Activated CD8-positive, alpha-beta T cell treated with anti-CD3 and anti-CD28 coated beads for 36 hours (primary cell): ENCODE measurements at regions of chr4 and their contacts with region 1.

Region 1: DNA sequence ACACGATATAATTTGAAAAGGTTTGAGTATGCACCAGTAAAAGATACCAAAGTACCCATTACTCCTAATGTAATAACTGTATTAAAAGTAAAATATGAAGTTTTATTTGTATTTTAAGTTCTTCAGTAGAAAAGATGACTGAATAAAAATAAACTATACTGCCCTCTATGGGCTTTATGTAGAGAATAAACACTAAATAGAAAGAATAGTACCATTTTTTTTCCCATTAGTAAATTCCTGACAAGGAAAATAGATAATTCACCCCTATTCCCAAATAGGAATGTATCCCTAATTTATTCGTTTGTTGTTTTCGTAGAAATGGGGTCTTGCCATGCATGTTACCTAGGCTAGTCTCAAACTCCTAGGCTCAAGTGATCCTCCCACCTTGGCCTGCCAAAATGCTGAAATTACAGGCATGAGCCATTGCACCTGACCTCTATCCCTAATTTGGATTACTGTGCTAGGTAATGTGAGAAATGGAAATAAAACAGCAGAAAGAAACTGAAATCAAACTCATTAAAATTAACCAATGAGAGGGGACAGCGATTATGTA is 73.6 kb upstream of the COX18 start:
- DNase-seq: no peak
- ATAC-seq: no peak
- H3K4me3 Mint-ChIP-seq: no peak overlapping the region
- H3K27ac Mint-ChIP-seq: no peak overlapping the region
- H3K4me1 Mint-ChIP-seq: peaks cover 10% of the 10 kb centered on the region
- H3K27me3 Mint-ChIP-seq: no peaks in the 10 kb centered on the region
- CTCF ChIP-seq: peak; percentile 52

Region 2: DNA sequence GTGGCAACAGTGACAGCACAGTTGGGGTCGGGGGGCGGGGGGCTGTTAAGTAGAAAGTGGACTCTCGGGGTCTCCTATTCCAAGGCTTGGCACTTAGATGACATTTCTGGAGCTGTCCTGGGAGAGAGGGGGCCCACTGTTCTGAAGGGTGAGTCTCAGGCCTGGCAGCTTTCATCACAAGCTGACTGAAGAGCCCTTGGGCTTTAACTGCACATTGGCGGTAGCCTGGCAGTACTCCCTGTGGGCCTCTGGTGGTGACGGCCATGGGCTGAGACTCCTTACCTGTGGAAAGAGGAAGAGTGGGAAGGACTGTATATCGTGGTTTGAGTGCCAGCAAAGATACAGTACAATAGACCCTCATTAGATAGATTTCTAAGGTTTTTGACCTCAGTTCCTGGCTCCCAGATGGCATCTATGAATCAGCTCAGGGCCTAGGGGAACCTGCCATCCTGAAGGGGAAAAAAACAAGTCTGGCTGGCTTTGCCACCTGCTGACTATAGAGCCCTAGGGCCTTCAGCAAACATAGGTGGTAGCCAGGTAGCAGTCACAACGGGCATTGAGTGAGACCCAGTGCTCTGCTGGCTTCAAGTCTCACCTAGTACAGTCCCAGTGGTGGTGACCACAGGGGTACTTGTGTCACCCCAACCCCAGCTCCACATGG is 27.6 kb after region 1 on chr4:
- CTCF ChIA-PET with region 1: no interaction called
- POLR2A ChIA-PET with region 1: no interaction called
- intact Hi-C with region 1: no loop called
- DNase-seq: no peak
- ATAC-seq: no peak
- H3K4me3 Mint-ChIP-seq: no peak overlapping the region
- H3K27ac Mint-ChIP-seq: no peak overlapping the region
- H3K4me1 Mint-ChIP-seq: peaks cover 22% of the 10 kb centered on the region
- H3K27me3 Mint-ChIP-seq: no peaks in the 10 kb centered on the region
- CTCF ChIP-seq: no peak

Region 3: DNA sequence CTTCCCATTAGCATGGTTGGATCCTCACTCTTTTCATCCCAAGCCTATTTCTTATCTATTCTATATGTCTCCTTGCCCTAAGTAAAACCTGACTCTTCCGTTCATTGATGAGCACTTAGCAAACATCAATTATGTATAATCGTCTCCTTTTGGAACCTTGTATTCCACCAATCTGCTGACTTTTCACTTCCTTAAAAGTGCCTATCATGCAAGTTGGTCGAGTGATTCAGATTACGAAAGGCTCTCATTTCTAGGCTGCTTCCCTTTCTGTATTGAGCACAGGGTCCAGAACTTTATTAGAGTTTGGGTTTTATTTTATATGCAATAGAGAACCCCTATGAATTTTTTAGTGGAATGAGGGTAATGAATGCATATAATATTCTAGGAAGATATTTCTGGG is 233.9 kb after region 1 on chr4:
- CTCF ChIA-PET with region 1: no interaction called
- POLR2A ChIA-PET with region 1: no interaction called
- intact Hi-C with region 1: loop called (anchors 5 kb)
- DNase-seq: no peak
- ATAC-seq: no peak
- H3K4me3 Mint-ChIP-seq: no peak overlapping the region
- H3K27ac Mint-ChIP-seq: no peak overlapping the region
- H3K4me1 Mint-ChIP-seq: no peaks in the 10 kb centered on the region
- H3K27me3 Mint-ChIP-seq: peaks cover 3% of the 10 kb centered on the region
- CTCF ChIP-seq: no peak